ENCODE measurements at regions of chr15 and their contacts with region 1.

Region 1: DNA sequence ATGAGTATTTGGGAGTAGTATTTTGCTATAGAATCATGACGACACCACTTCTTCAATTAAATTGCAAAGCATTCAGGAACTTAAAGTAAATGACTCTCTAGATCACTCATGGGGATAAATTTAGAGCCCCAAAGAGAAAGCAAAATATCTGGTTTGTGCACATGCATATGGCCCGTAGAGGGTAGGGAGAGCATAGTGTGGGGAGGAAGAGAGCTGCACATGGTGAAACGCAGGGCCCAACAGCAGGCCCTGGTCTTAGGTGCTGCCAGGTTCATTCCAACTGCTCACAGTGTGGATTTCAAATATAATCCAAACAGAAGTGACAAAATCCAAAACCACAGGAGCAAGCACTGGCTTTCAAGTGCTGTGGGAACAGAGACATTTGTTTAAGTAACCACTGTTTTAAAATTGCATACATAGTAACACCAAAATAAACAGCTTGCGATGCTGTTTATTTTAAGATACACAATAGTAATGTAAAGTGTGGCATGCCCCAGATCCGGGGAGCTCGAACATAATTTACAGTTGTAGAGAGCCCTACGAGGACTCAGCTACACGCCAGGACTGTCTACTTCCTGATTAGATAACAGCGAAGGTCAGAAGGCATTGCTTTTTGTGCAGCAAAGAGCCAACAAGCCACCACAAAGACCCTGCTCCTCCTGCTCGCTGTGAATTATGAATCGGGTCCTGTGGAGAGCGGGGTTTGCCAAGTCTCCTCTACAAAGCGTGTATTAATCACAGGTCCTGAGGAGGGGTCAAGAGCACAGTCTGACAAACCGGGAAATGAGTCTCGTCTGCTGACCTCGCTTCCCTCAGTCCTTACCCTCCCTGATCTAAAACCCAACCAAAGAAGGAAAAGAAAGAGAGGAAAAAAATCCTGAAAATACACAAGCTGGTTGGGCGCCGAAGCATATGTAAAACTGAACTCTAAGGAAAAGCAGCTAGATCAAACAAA is 80.6 kb downstream of the MEIS2 start:
- DNase-seq: no peak
- H3K4me3 ChIP-seq: no peak overlapping the region
- H3K27ac ChIP-seq: no peak overlapping the region
- H3K4me1 ChIP-seq: peaks cover 16% of the 10 kb centered on the region
- CTCF ChIP-seq: no peak

Region 2: DNA sequence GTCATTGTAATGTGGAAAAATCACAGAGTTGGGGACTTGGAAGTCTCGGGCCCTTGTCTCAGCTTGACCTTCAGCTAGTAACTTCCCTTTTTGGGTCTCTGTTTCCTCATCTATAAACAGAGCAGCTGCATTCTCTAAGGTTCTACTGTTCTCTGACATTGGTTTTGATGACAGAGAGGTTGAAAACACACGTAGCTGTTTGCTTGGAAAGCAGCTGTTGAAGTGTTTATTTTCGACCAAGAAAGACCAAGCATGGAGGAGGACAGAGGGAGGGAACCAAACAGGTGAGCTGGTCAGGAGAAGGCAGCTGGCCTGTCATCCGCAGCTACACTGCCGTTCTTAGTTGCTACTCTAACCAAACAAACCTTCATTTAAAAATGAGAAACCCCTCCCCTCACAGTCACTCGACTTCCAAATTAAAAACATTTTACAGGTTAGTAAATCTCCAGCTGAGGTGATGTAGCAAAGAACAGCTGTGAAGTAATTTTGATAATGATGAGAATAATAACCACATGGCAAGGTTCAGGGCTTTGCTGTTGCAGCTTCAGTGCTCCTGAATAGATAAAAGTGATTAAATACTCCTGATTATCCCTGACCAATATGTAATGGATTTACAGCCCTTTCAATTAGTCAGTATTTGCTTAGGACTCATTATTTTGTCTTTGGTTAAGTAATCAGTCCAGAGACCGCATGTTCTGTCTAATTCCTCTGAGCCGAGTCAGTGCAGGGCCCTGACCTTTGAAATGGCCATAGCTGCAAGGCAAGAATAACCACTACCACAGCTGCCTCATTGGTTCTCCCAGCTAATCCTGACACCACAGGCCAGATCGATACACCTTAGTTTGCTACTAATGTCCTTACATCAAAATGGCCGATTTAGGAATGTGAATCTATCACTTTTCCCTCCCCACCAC is 15.3 kb after region 1 on chr15:
- CTCF ChIA-PET with region 1: no interaction called
- POLR2A ChIA-PET with region 1: interaction called, 17 read pairs
- intact Hi-C with region 1: no loop called
- DNase-seq: peak; percentile 85
- H3K4me3 ChIP-seq: no peak overlapping the region
- H3K27ac ChIP-seq: peak overlapping the region; percentile 81
- H3K4me1 ChIP-seq: peaks cover 30% of the 10 kb centered on the region
- CTCF ChIP-seq: no peak

Region 3: GRCh38 chr15:37059086-37059485 is 39.3 kb after region 1 on chr15:
- CTCF ChIA-PET with region 1: no interaction called
- POLR2A ChIA-PET with region 1: no interaction called
- intact Hi-C with region 1: no loop called
- DNase-seq: no peak
- H3K4me3 ChIP-seq: no peak overlapping the region
- H3K27ac ChIP-seq: no peak overlapping the region
- H3K4me1 ChIP-seq: no peaks in the 10 kb centered on the region
- CTCF ChIP-seq: no peak